ENCODE measurements at regions of chr2 and their contacts with region 1.

Region 1: GRCh38 chr2:190319555-190320498 is at the start of gene HIBCH:
- DNase-seq: peak; percentile 93 to 100
- H3K4me3 ChIP-seq: peak within 1 kb of the TSS; percentile 84 to 88
- H3K27ac ChIP-seq: peak within 1 kb of the TSS; percentile 89 to 94
- H3K4me1 ChIP-seq: peaks cover 0 to 14% of the 10 kb centered on the region in 2 donors
- H3K27me3 ChIP-seq: no peaks in the 10 kb centered on the region
- CTCF ChIP-seq: peak in 2 of 3 experiments; percentile 66 to 74
- total RNA-seq, gene HIBCH: 3.7 TPM

Region 2: DNA sequence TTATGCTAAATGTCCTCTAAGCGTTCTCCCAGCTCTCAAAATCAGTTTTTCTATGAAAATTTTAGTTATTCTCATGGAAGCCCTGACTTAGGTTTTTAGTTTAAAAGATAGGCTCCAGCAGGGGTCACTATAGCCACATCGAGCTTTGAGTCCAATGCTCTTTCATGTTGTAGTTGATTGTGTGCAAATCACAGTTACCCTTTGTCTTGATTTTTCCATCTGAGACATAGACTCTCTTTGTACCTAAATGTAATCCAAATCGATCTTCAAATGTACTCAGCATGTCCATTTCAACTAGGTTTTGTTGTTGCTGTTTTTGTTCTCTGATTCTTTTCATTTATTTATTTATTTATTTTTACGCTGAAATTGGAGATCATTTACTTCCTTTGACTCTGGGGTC is 230.9 kb before region 1 on chr2:
- intact Hi-C with region 1: loop called (anchors 5 kb)
- DNase-seq: peak in 1 of 2 donors; percentile 64
- H3K4me3 ChIP-seq: no peak overlapping the region
- H3K27ac ChIP-seq: no peak overlapping the region
- H3K4me1 ChIP-seq: no peaks in the 10 kb centered on the region
- H3K27me3 ChIP-seq: no peaks in the 10 kb centered on the region
- CTCF ChIP-seq: peak; percentile 21 to 80 (median 64)

Region 3: DNA sequence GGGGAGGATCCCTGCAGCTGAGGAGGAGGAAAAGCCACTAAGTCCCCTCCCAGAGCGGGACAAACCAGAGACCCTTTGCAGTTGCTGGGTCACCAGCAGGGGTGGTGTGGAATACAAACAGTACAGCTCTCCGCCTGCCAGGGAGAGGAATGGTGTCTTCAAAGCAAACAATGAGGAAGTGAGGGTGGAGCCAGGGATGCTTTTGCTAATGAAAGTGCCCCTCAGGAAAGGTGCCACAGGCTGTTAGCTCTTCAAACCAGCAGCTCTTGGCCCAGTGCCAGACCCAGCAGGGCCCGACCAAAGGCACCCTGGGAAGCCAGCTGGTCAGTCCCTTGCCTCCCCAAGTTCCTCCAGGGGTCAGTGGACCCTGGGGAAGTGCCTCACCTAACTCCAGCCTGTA is 103.0 kb before region 1 on chr2:
- intact Hi-C with region 1: no loop called
- DNase-seq: no peak
- H3K4me3 ChIP-seq: no peak overlapping the region
- H3K27ac ChIP-seq: peak overlapping the region; percentile 17 to 76
- H3K4me1 ChIP-seq: peaks cover 15 to 40% of the 10 kb centered on the region in 2 donors
- H3K27me3 ChIP-seq: no peaks in the 10 kb centered on the region
- CTCF ChIP-seq: no peak

Region 4: GRCh38 chr2:190343500-190344275 is 23.9 kb after region 1 on chr2 and contains the start of gene INPP1:
- intact Hi-C with region 1: loop called (anchors 1 kb)
- DNase-seq: peak in 1 of 2 donors; percentile 90
- H3K4me3 ChIP-seq: peak within 1 kb of the TSS; percentile 60 to 81
- H3K27ac ChIP-seq: peak within 1 kb of the TSS; percentile 92 to 97
- H3K4me1 ChIP-seq: peaks cover 0 to 6% of the 10 kb centered on the region in 2 donors
- H3K27me3 ChIP-seq: no peaks in the 10 kb centered on the region
- CTCF ChIP-seq: peak in 1 of 3 experiments; percentile 11
- total RNA-seq, gene INPP1: 13.3 TPM

Region 5: DNA sequence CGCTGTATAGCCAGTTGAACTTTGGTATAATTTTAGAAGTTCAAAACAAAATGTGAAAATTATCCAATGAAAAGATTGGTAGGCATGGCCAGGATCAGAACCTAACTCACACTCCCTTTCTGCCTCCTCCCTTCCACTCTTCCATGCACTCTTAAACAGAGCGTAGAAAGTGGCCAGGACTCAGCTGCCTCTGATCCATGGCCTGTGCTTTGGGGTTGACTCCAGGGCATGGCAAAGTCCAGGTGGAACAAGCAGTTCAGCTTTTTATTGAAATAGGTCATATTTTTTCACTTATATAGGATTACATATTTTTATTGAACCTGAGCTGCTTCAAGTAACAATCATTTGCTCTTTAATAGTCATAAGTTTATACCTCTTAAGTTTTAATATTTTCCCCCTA is 49.8 kb after region 1 on chr2:
- intact Hi-C with region 1: loop called (anchors 5 kb)
- DNase-seq: no peak
- H3K4me3 ChIP-seq: no peak overlapping the region
- H3K27ac ChIP-seq: no peak overlapping the region
- H3K4me1 ChIP-seq: peaks cover 0 to 5% of the 10 kb centered on the region in 2 donors
- H3K27me3 ChIP-seq: no peaks in the 10 kb centered on the region
- CTCF ChIP-seq: no peak

Region 6: DNA sequence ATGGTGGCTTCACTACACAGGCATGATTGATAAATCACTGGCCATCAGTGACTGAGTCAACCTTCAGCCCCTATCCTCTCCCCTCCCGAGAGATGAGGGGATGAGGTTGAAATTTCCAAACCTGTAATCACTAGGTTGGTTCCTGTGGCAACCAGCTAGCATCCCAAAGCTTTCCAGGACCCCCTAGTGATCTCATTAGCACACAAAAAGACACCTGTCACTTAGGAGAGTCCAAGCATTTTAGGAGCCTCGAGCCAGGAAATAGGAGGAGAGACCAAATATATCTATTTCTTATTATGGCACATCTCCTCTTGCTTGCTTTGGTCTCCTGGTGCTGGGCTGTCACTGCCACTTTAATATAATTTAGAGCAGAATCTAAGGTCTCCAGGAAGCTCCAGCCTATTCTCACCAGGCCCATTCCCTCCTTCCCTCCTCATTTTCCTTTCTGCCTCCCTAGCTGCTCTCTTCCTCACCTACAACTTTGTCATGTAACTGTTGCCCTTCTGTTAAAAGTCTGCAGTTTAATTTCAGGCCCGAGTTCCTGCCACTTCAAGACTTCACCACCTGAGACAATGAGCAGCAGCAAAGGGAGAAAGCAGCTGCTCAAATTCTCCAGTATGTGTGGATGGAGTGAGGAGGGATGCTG is 295.9 kb after region 1 on chr2:
- intact Hi-C with region 1: no loop called
- DNase-seq: no peak
- H3K4me3 ChIP-seq: no peak overlapping the region
- H3K27ac ChIP-seq: no peak overlapping the region
- H3K4me1 ChIP-seq: no peaks in the 10 kb centered on the region
- H3K27me3 ChIP-seq: no peaks in the 10 kb centered on the region
- CTCF ChIP-seq: no peak

Region 7: DNA sequence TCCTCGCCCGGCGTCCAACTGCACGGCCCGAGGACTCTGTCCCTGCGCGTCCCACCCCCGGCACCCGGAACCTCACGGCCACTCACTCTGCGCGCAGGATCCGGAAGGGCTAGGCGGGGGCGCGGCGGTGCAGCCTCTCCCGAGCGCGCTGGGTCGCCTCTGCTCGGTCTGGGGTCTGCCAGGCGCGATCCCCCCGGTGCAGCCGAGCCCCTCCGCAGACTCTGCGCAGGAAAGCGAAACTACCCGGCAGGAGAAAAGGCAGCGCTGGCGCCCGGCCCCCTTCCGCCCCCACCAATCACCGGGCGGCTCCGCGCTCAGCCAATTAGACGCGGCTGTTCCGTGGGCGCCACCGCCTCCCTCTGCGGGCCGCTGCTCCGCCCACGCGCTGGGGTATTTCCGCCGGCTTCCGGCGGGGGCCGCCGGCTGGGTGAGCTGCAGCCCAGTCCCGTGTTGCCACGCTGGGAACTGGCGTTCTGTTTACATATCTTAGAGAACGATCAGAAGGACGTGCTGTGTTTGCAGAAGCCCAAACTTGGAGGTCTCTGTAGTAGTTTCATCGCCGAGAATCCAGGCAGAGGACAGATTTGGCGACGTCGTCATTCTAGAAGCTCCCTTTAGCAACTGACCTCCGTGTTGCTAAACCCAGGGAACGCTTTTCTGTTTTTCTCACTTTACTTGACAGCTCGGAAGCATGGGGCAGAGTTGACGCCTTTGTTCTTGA is 694.3 kb after region 1 on chr2 and contains the start of gene STAT1:
- intact Hi-C with region 1: loop called (anchors 10 kb)
- DNase-seq: peak; percentile 74 to 96
- H3K4me3 ChIP-seq: peak within 1 kb of the TSS; percentile 84 to 93
- H3K27ac ChIP-seq: peak within 1 kb of the TSS; percentile 91 to 93
- H3K4me1 ChIP-seq: peaks cover 3 to 14% of the 10 kb centered on the region in 2 donors
- H3K27me3 ChIP-seq: no peaks in the 10 kb centered on the region
- CTCF ChIP-seq: peak in 2 of 3 experiments; percentile 31 to 32
- total RNA-seq, gene STAT1: 13.0 TPM

Measured in ascending aorta (tissue), 2 donors.